CD4-positive, alpha-beta memory T cell (primary cell): ENCODE measurements at regions of chr1 and their contacts with region 1.

Region 1: DNA sequence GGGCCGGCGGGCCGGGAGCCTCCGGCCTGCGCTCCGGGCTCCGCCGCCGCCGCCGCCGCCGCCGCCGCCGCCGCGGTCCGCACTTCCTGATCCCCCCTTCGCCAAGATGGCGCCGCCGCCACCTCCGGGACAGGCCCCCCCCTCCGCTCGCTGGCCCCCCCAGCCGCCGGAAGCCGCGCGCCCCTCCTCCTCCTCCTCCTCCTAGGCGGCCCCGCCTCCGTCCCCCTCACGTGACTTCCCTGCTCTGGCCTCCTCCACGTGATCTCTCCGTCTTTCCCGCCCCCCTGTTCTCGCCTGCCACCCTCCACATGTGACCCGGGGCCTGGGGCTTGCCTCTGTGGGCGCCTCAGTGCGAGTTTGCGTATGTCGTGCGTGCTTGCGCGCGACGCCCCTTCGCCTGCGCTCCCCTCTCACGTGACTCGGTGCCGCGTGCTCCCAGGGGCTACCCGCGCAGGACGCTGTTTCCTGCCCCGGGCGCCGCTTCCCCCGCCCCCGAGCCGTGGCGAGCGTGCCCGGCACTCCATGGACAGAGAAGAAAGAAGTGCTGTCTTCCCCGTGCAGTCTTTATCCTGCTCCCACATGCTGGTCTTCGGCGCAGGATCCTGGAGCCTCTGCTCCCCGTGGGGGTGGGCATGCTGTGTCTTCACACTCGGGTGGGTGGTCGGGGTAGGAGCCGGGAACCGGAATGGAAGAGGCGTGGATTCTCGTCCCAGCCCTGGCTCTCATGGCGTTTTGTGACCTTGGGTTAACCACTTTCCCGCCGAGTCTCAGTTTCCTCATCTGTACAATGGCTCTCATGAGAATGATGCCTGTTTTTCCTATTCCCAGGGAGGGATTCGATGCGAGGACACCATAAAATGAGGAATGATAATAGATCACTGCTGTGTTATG is at the start of gene UBE2Q1:
- DNase-seq: peak; percentile 99 to 100 (median 100)
- H3K4me3 ChIP-seq: peak within 1 kb of the TSS; percentile 83 to 84
- H3K4me3 Mint-ChIP-seq: peak within 1 kb of the TSS; percentile 91 to 97 (median 94)
- H3K27ac ChIP-seq: peak within 1 kb of the TSS; percentile 82
- H3K27ac Mint-ChIP-seq: peak within 1 kb of the TSS; percentile 85 to 96 (median 94)
- H3K4me1 ChIP-seq: peaks cover 38% of the 10 kb centered on the region
- H3K4me1 Mint-ChIP-seq: peaks cover 22 to 45% (median 38%) of the 10 kb centered on the region in 4 donors
- H3K27me3 ChIP-seq: no peaks in the 10 kb centered on the region
- H3K27me3 Mint-ChIP-seq: no peaks in the 10 kb centered on the region
- total RNA-seq, gene UBE2Q1: 112 to 132 TPM

Region 2: DNA sequence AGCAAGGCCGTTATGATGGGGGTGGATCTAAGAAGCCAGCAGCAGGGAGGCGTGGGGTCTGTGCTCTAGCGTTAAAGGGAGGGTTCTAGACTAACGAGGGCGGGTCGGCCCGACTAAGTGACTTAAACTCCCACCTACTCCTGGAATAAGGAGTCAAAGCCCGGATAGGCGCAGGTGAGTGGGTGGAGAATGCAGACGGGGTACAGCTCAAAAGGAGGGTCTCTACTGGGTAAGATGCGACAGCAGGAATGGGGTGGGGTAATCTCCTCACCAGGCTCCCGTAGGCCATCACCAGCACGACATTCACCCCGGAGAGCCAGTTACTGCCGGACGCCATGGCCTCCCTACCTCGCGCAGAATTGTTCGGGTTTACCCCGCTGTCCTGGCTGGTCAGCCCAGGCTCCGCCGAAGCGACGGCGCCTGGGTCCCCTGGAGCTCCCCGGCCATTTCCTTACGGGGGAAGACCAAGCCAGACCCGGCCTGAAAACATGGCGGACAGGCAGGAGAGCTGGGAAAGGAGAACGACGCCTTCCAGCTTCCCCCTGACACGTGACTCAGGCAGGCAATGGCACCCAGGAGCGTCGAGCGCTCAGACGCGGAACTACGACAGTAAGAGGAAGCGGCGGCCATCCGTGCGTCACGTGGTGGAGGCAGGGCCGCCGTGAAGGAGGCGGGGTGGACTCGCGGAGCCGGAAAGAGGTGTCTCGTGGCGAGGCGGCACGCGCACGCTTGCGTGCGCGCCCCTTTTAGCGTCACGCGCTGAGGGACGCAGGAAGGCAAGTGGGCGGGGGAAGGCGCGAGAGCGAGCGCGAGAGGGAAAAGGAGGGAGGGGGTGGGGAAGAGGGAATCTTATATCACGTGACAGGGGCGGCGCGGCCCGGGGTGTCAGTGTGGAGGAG is 338.5 kb before region 1 on chr1 and contains the start of gene UBAP2L:
- CTCF ChIA-PET with region 1: no interaction called
- POLR2A ChIA-PET with region 1: interaction called, 4 read pairs
- intact Hi-C with region 1: loop called (anchors 1 kb)
- DNase-seq: peak; percentile 97 to 99 (median 99)
- H3K4me3 ChIP-seq: peak within 1 kb of the TSS; percentile 93 to 99
- H3K4me3 Mint-ChIP-seq: peak within 1 kb of the TSS; percentile 92 to 100 (median 97)
- H3K27ac ChIP-seq: peak within 1 kb of the TSS; percentile 97
- H3K27ac Mint-ChIP-seq: peak within 1 kb of the TSS; percentile 96 to 99 (median 99)
- H3K4me1 ChIP-seq: peaks cover 66% of the 10 kb centered on the region
- H3K4me1 Mint-ChIP-seq: peaks cover 52 to 78% (median 65%) of the 10 kb centered on the region in 4 donors
- H3K27me3 ChIP-seq: no peaks in the 10 kb centered on the region
- H3K27me3 Mint-ChIP-seq: no peaks in the 10 kb centered on the region
- total RNA-seq, gene UBAP2L: 180 to 189 TPM

Region 3: GRCh38 chr1:154404984-154405761 is 153.6 kb before region 1 on chr1 and contains the start of gene IL6R:
- CTCF ChIA-PET with region 1: interaction called, 4 read pairs
- POLR2A ChIA-PET with region 1: interaction called, 3 read pairs
- intact Hi-C with region 1: loop called (anchors 1 kb)
- DNase-seq: peak; percentile 80 to 85 (median 82)
- H3K4me3 ChIP-seq: peak within 1 kb of the TSS; percentile 71 to 84
- H3K4me3 Mint-ChIP-seq: peak within 1 kb of the TSS; percentile 93 to 99 (median 97)
- H3K27ac ChIP-seq: peak within 1 kb of the TSS; percentile 68
- H3K27ac Mint-ChIP-seq: peak within 1 kb of the TSS; percentile 92 to 97 (median 96)
- H3K4me1 ChIP-seq: peaks cover 73% of the 10 kb centered on the region
- H3K4me1 Mint-ChIP-seq: peaks cover 43 to 86% (median 64%) of the 10 kb centered on the region in 4 donors
- H3K27me3 ChIP-seq: no peaks in the 10 kb centered on the region
- H3K27me3 Mint-ChIP-seq: no peaks in the 10 kb centered on the region
- total RNA-seq, gene IL6R: 101 to 106 TPM

Region 4: GRCh38 chr1:154747740-154748404 is 189.1 kb after region 1 on chr1:
- CTCF ChIA-PET with region 1: interaction called, 7 read pairs
- POLR2A ChIA-PET with region 1: no interaction called
- intact Hi-C with region 1: loop called (anchors 5 kb)
- DNase-seq: peak; percentile 29 to 55 (median 48)
- H3K4me3 ChIP-seq: peak overlapping the region in 1 of 2 donors; percentile 16
- H3K4me3 Mint-ChIP-seq: peak overlapping the region; percentile 51 to 92 (median 78)
- H3K27ac ChIP-seq: no peak overlapping the region
- H3K27ac Mint-ChIP-seq: peak overlapping the region; percentile 69 to 95 (median 88)
- H3K4me1 ChIP-seq: peaks cover 49% of the 10 kb centered on the region
- H3K4me1 Mint-ChIP-seq: peaks cover 29 to 42% (median 37%) of the 10 kb centered on the region in 4 donors
- H3K27me3 ChIP-seq: no peaks in the 10 kb centered on the region
- H3K27me3 Mint-ChIP-seq: peaks cover 2 to 4% of the 10 kb centered on the region in 2 donors

Region 5: DNA sequence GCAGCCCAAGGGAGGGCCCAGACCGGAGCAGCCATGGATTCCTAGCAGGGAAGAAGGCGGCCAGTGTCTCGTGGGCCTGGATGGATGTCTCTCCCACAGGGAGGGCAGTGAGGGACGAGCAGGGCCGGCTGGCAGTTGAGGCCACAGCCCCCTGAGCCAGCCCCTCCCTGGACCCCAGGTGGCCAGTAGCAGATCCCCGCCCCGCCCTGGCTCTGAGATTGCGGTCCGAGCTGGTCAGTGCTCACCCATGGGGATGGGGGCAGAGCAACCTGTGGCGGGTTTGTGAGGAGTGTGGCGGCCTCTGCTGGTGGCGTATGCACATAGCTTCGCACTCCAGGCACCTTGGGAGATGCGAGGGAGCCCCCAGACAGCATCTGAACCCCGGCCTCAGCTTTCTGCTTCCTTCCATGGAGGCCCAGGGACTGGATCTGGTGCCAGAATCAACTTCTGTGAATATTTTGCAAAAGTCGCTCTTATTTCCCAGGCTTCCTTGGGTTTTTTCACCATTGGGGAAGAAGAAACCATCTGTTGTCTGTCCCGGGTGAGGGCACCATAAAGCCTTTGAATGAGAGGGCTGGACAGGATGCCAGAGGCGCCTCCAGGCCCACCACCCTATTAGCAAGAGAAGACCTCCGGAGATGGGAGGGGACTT is 319.7 kb after region 1 on chr1:
- CTCF ChIA-PET with region 1: interaction called, 29 read pairs
- POLR2A ChIA-PET with region 1: interaction called, 5 read pairs
- intact Hi-C with region 1: loop called (anchors 1 kb)
- DNase-seq: peak; percentile 58 to 68 (median 62)
- H3K4me3 ChIP-seq: no peak overlapping the region
- H3K4me3 Mint-ChIP-seq: no peak overlapping the region
- H3K27ac ChIP-seq: no peak overlapping the region
- H3K27ac Mint-ChIP-seq: no peak overlapping the region
- H3K4me1 ChIP-seq: no peaks in the 10 kb centered on the region
- H3K4me1 Mint-ChIP-seq: peaks cover 0 to 1% (median 0%) of the 10 kb centered on the region in 4 donors
- H3K27me3 ChIP-seq: no peaks in the 10 kb centered on the region
- H3K27me3 Mint-ChIP-seq: peaks cover 3 to 5% of the 10 kb centered on the region in 2 donors

Region 6: DNA sequence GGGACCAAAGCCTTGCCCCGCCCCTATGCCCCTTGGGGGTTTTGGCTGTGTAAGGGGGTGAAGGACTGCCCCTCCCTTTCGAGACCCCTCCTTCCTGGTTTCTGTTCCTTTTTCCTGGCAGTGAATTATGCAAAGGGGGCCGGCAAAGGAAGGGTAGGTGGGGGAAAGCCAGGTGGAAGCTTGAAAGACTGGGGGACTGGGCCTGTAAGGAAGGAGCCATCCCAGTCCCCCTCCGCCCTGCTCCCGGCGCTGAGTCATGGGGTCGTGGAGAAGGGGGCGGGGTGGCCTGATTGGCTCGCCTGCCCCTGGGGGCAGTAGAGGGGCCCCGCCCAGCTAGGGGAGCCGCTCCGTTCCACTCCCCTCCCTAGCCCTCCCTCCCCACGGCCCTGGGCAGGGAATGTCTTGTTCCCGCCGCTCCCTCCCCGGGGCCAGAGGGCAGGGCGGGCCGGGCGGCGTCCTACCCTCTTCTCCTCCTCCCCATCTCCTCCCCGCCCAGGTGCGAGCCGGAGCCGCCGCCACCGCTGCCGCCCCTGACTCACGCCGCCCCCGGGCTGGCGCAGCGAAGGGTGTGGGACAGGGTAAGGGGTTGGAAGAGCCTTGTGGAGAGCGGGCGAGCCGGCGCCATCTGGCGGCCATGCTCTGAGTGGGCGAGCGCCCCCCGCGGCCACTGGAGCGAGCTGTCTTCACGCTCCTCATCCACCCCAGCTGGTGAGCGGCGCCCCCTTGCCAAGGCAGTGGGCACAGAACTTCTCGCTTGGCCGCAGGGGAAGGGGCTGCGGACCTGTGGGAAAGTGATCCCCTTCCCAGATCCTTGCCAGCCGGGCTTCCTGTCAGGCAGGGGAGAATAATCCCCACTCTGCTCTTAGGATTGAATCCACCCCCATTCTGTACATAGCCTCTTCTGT is 458.5 kb after region 1 on chr1:
- CTCF ChIA-PET with region 1: interaction called, 7 read pairs
- POLR2A ChIA-PET with region 1: no interaction called
- intact Hi-C with region 1: loop called (anchors 1 kb)
- DNase-seq: peak; percentile 88 to 91 (median 89)
- H3K4me3 ChIP-seq: peak overlapping the region; percentile 11 to 24
- H3K4me3 Mint-ChIP-seq: peak overlapping the region in 7 of 8 donors; percentile 58 to 86 (median 74)
- H3K27ac ChIP-seq: peak overlapping the region; percentile 86
- H3K27ac Mint-ChIP-seq: peak overlapping the region; percentile 76 to 94 (median 85)
- H3K4me1 ChIP-seq: peaks cover 64% of the 10 kb centered on the region
- H3K4me1 Mint-ChIP-seq: peaks cover 46 to 71% (median 64%) of the 10 kb centered on the region in 4 donors
- H3K27me3 ChIP-seq: no peaks in the 10 kb centered on the region
- H3K27me3 Mint-ChIP-seq: no peaks in the 10 kb centered on the region